ENCODE measurements at regions of chr22 and their contacts with region 1.

Region 1: DNA sequence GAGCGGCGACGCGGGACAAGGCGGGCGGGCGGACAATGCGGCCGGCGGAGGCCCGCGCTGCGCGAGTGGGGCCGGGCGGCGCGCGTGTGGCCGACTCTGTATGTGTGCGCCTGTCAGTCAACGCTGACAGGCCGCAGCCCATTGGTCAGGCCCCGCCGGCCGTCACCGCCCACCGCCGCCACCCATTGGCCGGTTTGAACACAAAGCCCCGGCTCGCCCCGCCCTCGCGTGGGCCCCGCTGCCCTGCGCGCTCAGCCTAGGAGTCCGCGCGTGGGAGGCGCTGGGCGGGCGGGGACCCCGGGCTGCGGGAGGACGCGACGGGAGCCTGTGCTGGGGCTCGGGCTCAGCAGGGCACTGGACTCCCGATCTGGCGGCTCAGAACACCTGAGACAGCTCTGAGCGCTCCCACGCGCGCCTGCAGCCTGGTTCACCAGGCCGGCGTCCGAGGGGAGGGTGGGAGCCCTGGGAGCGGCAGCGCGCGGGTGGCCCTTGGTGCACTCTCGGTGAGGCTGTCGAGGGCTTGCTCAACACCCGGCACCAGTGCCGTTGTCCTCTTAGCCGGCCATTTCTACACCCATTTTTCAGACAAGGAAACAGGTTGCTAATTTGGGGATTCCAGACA is at the start of gene SUN2:
- DNase-seq: peak; percentile 97
- H3K4me3 ChIP-seq: peak within 1 kb of the TSS; percentile 72 to 87
- H3K27ac ChIP-seq: peak within 1 kb of the TSS; percentile 87 to 94
- H3K4me1 ChIP-seq: peaks cover 28% of the 10 kb centered on the region
- H3K27me3 ChIP-seq: no peaks in the 10 kb centered on the region
- CTCF ChIP-seq: no peak
- POLR2A ChIP-seq: no peak
- total RNA-seq, gene SUN2: 295 to 331 TPM

Region 2: DNA sequence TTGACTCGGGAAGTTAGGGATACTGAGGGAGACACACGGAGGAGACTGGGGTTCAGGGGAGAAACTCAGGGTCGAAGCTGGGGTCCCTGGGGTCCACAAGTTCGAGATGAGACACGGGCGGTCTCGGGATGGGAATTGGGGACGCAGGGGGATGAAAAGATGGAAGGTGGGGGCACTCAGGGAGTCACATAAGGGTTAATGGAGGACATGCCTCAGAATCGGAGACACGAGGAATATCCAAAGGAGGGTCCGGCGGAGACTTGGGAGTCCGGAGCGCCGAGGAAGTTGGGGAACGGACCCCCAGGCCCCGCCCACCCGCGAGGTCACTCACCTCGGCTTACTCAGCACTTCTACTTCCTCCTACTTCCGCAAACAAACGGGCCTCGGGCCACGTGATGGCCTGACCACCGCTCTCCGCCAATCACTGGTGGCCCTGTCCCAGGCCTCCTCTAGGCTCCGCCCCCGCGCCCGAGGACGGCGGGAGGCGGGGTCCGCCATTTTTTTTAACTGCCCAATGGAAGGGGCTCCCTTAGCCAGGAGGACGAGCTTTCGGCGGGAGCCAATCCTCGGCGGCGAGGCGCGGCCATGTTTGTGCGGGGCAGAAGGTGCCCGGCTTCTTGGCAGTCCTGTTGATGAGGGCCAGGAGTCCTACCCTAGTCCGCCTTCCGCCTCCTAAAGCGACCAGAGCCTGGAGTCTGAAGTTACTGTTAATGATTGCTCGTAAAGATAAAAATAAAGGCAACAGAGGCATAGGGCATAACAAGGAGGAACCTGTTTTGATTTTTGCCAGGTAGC is 574.4 kb before region 1 on chr22 and contains the start of gene PLA2G6:
- intact Hi-C with region 1: no loop called
- DNase-seq: peak; percentile 99
- H3K4me3 ChIP-seq: peak within 1 kb of the TSS; percentile 61 to 63
- H3K27ac ChIP-seq: peak within 1 kb of the TSS; percentile 95 to 98
- H3K4me1 ChIP-seq: peaks cover 21% of the 10 kb centered on the region
- H3K27me3 ChIP-seq: no peaks in the 10 kb centered on the region
- CTCF ChIP-seq: no peak
- POLR2A ChIP-seq: peak; percentile 15
- total RNA-seq, gene PLA2G6: 89.4 to 122 TPM

Region 3: DNA sequence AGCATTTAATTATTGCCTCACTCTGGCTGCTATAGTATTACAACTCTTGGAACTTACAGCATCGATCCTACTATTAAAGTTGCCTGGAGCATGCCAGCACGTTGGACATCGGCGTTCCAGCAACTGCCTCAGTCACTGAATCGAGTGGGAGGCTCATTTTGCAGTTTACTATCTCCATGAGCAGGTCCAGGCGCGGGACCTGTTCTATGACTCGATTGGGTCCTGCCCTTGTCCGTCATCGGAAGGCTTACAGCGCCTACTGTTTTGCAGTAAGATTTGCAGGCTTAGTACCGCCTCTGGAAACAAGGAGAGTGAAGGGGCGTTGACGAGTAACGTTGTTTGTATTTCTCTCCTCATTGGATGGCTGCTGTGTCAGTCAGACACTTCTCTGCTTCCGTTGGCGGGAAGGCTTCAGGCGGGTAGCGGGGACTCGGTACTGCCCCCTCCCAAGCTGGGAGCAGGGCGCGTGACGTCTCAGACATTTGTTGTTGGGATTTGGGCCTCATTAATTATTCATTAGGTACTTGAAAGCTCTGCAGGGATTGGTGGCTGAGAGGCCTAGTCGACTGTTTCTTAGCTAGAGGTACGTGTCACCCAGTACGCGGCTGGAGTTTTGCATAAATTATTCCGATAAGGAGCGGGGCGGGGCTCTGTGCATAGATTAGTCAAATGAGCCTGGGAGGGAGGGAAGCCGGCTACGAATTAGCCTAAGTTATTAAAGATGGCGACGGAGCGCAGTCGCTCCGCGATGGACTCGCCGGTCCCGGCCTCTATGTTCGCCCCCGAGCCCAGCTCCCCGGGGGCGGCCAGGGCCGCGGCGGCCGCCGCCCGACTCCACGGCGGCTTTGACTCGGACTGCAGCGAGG is 50.6 kb before region 1 on chr22 and contains the start of gene GTPBP1:
- intact Hi-C with region 1: loop called (anchors 10 kb)
- DNase-seq: peak; percentile 100
- H3K4me3 ChIP-seq: peak within 1 kb of the TSS; percentile 83 to 89
- H3K27ac ChIP-seq: peak within 1 kb of the TSS; percentile 91 to 95
- H3K4me1 ChIP-seq: peaks cover 26% of the 10 kb centered on the region
- H3K27me3 ChIP-seq: no peaks in the 10 kb centered on the region
- CTCF ChIP-seq: peak in 1 of 3 experiments; percentile 4
- POLR2A ChIP-seq: peak; percentile 96
- total RNA-seq, gene GTPBP1: 81.5 to 89.8 TPM